Caco-2 (cell line): ENCODE measurements at regions of chr4 and their contacts with region 1.

Region 1: GRCh38 chr4:87220094-87220822 is at the start of gene KLHL8:
- DNase-seq: peak; percentile 87 to 94
- H3K4me3 ChIP-seq: peak within 1 kb of the TSS; percentile 94
- H3K4me3 Mint-ChIP-seq: peak within 1 kb of the TSS; percentile 94
- H3K27ac Mint-ChIP-seq: peak within 1 kb of the TSS; percentile 93
- H3K4me1 ChIP-seq: peaks cover 18% of the 10 kb centered on the region; the same call in 1 of the 2 replicates
- H3K4me1 Mint-ChIP-seq: peaks cover 30% of the 10 kb centered on the region
- H3K27me3 ChIP-seq: no peaks in the 10 kb centered on the region
- H3K27me3 Mint-ChIP-seq: no peaks in the 10 kb centered on the region
- CTCF ChIP-seq: peak in 1 of 2 experiments; percentile 33
- total RNA-seq, gene KLHL8: 23.4 and 27.7 TPM in 2 replicates

Region 2: DNA sequence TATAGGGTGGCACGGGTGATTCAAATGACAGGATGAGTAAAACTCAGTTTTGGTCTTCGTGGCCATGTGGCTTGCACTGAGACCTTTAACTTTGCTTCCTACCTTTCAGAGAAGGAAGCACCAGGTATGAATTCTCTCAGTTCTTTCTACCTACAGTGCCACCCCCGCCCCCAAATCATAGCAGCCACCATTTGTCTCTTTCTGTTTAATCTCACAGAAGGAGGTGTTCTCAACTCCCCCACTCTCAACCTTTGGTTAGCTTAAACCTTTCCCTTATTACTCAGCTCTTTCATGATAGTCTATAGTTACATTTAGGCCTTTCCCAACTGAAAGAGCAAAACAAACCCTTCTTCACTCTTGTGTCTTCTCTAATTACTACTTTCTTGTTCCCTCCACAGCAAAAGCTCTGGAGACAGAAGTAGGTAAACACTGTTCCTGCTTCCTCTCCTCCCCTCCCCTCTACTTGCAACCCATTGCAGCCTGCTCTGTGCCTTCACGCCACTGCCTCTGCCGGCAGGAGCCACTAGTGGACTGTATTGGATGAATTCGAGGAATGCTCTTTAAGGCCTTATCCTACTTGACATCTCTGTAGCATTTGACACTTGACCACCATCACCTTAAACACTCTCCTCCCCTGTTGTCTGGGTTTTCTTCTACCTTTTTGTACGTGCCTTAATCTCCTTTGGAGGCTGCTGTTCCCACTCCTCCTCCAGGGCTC is 161.7 kb before region 1 on chr4:
- CTCF ChIA-PET with region 1: no interaction called
- POLR2A ChIA-PET with region 1: interaction called, 14 read pairs
- intact Hi-C with region 1: no loop called
- DNase-seq: peak in 1 of 2 experiments; percentile 24
- H3K4me3 ChIP-seq: no peak overlapping the region
- H3K4me3 Mint-ChIP-seq: no peak overlapping the region
- H3K27ac Mint-ChIP-seq: peak overlapping the region; percentile 42
- H3K4me1 ChIP-seq: 0 out of 2 replicates have a peak, but pooled peaks cover 3% of the 10 kb centered on the region
- H3K4me1 Mint-ChIP-seq: peaks cover 30% of the 10 kb centered on the region
- H3K27me3 ChIP-seq: no peaks in the 10 kb centered on the region
- H3K27me3 Mint-ChIP-seq: no peaks in the 10 kb centered on the region
- CTCF ChIP-seq: peak in 1 of 2 experiments; percentile 10